ENCODE measurements at regions of chr1 and their contacts with region 1.

Region 1: DNA sequence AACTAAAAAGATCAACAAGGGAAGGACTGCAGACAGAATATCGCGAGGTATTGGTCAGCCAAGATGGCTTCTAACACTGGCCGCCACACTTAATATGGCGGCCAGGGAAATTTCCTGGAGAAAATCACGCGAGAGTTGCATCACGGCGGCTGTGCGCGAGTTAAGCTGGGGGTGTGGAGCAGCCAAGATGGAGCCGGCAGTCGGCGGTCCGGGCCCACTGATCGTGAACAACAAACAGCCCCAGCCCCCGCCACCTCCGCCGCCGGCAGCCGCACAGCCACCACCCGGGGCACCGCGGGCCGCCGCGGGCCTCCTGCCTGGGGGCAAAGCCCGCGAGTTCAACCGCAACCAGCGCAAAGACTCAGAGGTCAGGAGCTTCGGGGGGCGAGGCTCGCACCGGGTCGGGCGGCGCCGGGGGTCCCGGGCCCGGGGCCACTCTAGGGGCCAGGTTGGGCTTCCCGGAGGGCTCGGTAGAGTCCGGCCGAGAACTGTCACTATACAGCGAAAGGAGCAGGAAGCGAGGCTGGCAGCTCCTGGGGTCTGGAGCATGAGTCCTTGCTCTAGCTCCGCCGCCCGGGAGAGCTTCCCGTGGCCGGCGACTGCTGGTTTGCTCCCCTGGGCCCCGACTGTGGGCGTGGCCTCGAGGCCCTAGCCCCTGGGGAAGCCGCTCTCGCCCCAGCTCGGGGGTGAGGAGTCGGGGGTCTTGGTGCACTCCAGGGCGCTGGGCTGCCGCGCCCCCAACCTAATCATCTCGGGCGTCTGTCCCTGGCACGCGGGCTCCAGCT is at the start of gene STRIP1:
- DNase-seq: peak; percentile 83 to 97 (median 90)
- ATAC-seq: peak; percentile 94
- H3K4me3 ChIP-seq: peak within 1 kb of the TSS; percentile 77 to 89
- H3K4me3 Mint-ChIP-seq: peak within 1 kb of the TSS; percentile 98
- H3K27ac ChIP-seq: peak within 1 kb of the TSS; percentile 74 to 84
- H3K27ac Mint-ChIP-seq: peak within 1 kb of the TSS; percentile 96
- H3K4me1 ChIP-seq: peaks cover 36% of the 10 kb centered on the region
- H3K4me1 Mint-ChIP-seq: peaks cover 53% of the 10 kb centered on the region
- H3K27me3 ChIP-seq: no peaks in the 10 kb centered on the region
- H3K27me3 Mint-ChIP-seq: no peaks in the 10 kb centered on the region
- CTCF ChIP-seq: no peak
- total RNA-seq, gene STRIP1: 94.6 to 109 TPM

Region 2: GRCh38 chr1:109099938-109100773 is 934.5 kb before region 1 on chr1:
- CTCF ChIA-PET with region 1: no interaction called
- POLR2A ChIA-PET with region 1: no interaction called
- intact Hi-C with region 1: loop called in 1 of 2 experiments (anchors 10 kb)
- DNase-seq: peak; percentile 95 to 98 (median 97)
- ATAC-seq: peak; percentile 91
- H3K4me3 ChIP-seq: peak overlapping the region; percentile 88 to 93
- H3K4me3 Mint-ChIP-seq: peak overlapping the region; percentile 98
- H3K27ac ChIP-seq: peak overlapping the region; percentile 86 to 93
- H3K27ac Mint-ChIP-seq: peak overlapping the region; percentile 99
- H3K4me1 ChIP-seq: peaks cover 9% of the 10 kb centered on the region
- H3K4me1 Mint-ChIP-seq: peaks cover 18% of the 10 kb centered on the region
- H3K27me3 ChIP-seq: no peaks in the 10 kb centered on the region
- H3K27me3 Mint-ChIP-seq: no peaks in the 10 kb centered on the region
- CTCF ChIP-seq: peak; percentile 83

Region 3: DNA sequence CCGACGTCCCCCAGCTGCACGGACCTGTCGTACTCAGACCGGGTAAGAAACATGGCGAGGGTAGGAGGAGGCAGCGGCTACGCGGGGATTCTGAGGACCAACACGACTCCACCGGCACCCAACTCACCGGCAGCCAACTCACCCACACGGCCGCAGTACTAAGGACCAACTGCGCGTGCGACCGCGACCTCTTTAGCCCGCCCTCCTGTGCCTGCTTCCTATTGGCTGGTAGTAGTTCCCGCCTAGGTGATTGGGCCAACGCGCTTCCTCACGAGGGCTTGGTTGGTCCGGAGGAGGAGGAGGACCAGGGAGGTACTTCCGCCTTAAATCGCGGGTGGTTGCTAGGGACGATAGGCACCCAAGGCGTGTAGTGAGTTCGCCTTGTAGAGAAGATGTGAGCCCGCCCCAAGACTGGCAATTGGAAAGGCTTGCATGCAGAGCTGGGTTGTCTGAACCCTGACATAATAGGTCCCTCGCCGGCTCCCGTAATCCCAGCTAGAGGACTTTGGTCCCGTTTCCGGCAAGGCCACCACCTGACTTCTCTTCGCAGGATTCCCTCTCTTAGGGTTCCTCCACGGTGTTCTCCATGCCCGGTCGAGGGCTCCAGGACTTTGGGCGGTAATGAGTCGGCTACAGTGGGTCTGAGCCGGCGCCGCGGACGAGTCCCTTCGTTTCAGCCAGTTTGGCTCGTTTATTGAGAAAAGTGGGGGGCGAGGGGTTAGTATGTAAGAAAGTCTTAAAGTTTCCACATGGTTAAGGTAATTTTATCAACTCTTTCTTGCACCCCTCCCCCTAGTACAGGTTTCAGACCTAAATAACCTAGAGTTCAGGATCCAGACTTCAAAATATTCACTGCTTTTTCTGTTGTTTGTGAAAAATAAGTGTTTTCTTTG is 608.1 kb before region 1 on chr1 and contains the start of gene PSMA5:
- CTCF ChIA-PET with region 1: interaction called, 3 read pairs
- POLR2A ChIA-PET with region 1: no interaction called
- intact Hi-C with region 1: loop called (anchors 1 to 2 kb)
- DNase-seq: peak; percentile 87 to 99 (median 93)
- ATAC-seq: peak; percentile 90
- H3K4me3 ChIP-seq: peak within 1 kb of the TSS; percentile 83 to 84
- H3K4me3 Mint-ChIP-seq: peak within 1 kb of the TSS; percentile 98
- H3K27ac ChIP-seq: peak within 1 kb of the TSS; percentile 80 to 90
- H3K27ac Mint-ChIP-seq: peak within 1 kb of the TSS; percentile 99
- H3K4me1 ChIP-seq: peaks cover 39% of the 10 kb centered on the region
- H3K4me1 Mint-ChIP-seq: peaks cover 39% of the 10 kb centered on the region
- H3K27me3 ChIP-seq: no peaks in the 10 kb centered on the region
- H3K27me3 Mint-ChIP-seq: no peaks in the 10 kb centered on the region
- CTCF ChIP-seq: no peak
- total RNA-seq, gene PSMA5: 30.9 to 32.6 TPM

Region 4: DNA sequence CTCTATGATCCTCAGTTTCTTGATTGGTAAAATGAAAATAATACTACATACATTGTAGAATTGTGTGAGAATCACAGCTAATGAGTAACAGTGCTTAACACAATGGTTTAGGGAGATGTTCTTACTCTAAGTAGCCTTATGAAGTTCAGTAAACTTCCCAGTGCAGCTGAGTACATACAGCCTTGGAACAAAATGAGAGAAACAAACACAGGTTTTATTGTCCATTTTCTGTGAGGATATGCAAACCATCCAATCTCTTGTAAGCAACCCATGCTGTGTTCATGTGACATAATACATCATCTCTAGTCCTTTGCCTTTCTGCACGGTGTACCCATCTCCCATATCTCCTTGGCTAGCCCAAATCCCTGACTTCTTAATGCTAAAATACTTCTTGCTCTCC is 14.9 kb before region 1 on chr1:
- CTCF ChIA-PET with region 1: interaction called, 14 read pairs
- POLR2A ChIA-PET with region 1: interaction called, 4 read pairs
- intact Hi-C with region 1: no loop called
- DNase-seq: no peak
- ATAC-seq: no peak
- H3K4me3 ChIP-seq: no peak overlapping the region
- H3K4me3 Mint-ChIP-seq: no peak overlapping the region
- H3K27ac ChIP-seq: no peak overlapping the region
- H3K27ac Mint-ChIP-seq: no peak overlapping the region
- H3K4me1 ChIP-seq: no peaks in the 10 kb centered on the region
- H3K4me1 Mint-ChIP-seq: no peaks in the 10 kb centered on the region
- H3K27me3 ChIP-seq: no peaks in the 10 kb centered on the region
- H3K27me3 Mint-ChIP-seq: no peaks in the 10 kb centered on the region
- CTCF ChIP-seq: no peak

Region 5: GRCh38 chr1:110106013-110106941 is 71.6 kb after region 1 on chr1:
- CTCF ChIA-PET with region 1: interaction called, 25 read pairs
- POLR2A ChIA-PET with region 1: no interaction called
- intact Hi-C with region 1: loop called in 1 of 2 experiments (anchors 1 kb)
- DNase-seq: peak; percentile 24 to 72 (median 52)
- ATAC-seq: peak; percentile 64
- H3K4me3 ChIP-seq: no peak overlapping the region
- H3K4me3 Mint-ChIP-seq: no peak overlapping the region
- H3K27ac ChIP-seq: no peak overlapping the region
- H3K27ac Mint-ChIP-seq: no peak overlapping the region
- H3K4me1 ChIP-seq: no peaks in the 10 kb centered on the region
- H3K4me1 Mint-ChIP-seq: no peaks in the 10 kb centered on the region
- H3K27me3 ChIP-seq: no peaks in the 10 kb centered on the region
- H3K27me3 Mint-ChIP-seq: peaks cover 7% of the 10 kb centered on the region
- CTCF ChIP-seq: peak; percentile 69

Region 6: GRCh38 chr1:110963691-110964399 is 929.2 kb after region 1 on chr1 and contains the start of gene LRIF1:
- CTCF ChIA-PET with region 1: no interaction called
- POLR2A ChIA-PET with region 1: no interaction called
- intact Hi-C with region 1: loop called in 1 of 2 experiments (anchors 5 kb)
- DNase-seq: peak; percentile 98 to 100 (median 100)
- ATAC-seq: peak; percentile 96
- H3K4me3 ChIP-seq: peak within 1 kb of the TSS; percentile 77 to 88
- H3K4me3 Mint-ChIP-seq: peak within 1 kb of the TSS; percentile 84
- H3K27ac ChIP-seq: peak within 1 kb of the TSS; percentile 98 to 99
- H3K27ac Mint-ChIP-seq: peak within 1 kb of the TSS; percentile 99
- H3K4me1 ChIP-seq: peaks cover 21% of the 10 kb centered on the region
- H3K4me1 Mint-ChIP-seq: peaks cover 33% of the 10 kb centered on the region
- H3K27me3 ChIP-seq: peaks cover 0 to 2% of the 10 kb centered on the region in 2 experiments
- H3K27me3 Mint-ChIP-seq: peaks cover 10% of the 10 kb centered on the region
- CTCF ChIP-seq: peak; percentile 59
- total RNA-seq, gene LRIF1: 1.8 to 1.9 TPM

Measured in CD8-positive, alpha-beta T cell (primary cell).